Activated naive CD8-positive, alpha-beta T cell treated with anti-CD3 and anti-CD28 coated beads, Interleukin-2, amount 10 ng/mL, durations not matched to agents 7 days and 5 days (primary cell): ENCODE measurements at regions of chr6 and their contacts with region 1.

Region 1: GRCh38 chr6:11732036-11732631 is 46.5 kb downstream of the ADTRP start:
- DNase-seq: no peak
- ATAC-seq: peak; percentile 26
- H3K4me3 Mint-ChIP-seq: peak overlapping the region; percentile 62
- H3K27ac Mint-ChIP-seq: peak overlapping the region; percentile 83
- H3K4me1 Mint-ChIP-seq: peaks cover 38% of the 10 kb centered on the region
- H3K27me3 Mint-ChIP-seq: no peaks in the 10 kb centered on the region

Region 2: GRCh38 chr6:11712760-11713159 is 19.4 kb before region 1 on chr6:
- POLR2A ChIA-PET with region 1: interaction called, 14 read pairs
- DNase-seq: no peak
- ATAC-seq: no peak
- H3K4me3 Mint-ChIP-seq: no peak overlapping the region
- H3K27ac Mint-ChIP-seq: peak overlapping the region; percentile 95
- H3K4me1 Mint-ChIP-seq: peaks cover 54% of the 10 kb centered on the region
- H3K27me3 Mint-ChIP-seq: no peaks in the 10 kb centered on the region